Ascending aorta (tissue), 2 donors: ENCODE measurements at regions of chr1 and their contacts with region 1.

Region 1: DNA sequence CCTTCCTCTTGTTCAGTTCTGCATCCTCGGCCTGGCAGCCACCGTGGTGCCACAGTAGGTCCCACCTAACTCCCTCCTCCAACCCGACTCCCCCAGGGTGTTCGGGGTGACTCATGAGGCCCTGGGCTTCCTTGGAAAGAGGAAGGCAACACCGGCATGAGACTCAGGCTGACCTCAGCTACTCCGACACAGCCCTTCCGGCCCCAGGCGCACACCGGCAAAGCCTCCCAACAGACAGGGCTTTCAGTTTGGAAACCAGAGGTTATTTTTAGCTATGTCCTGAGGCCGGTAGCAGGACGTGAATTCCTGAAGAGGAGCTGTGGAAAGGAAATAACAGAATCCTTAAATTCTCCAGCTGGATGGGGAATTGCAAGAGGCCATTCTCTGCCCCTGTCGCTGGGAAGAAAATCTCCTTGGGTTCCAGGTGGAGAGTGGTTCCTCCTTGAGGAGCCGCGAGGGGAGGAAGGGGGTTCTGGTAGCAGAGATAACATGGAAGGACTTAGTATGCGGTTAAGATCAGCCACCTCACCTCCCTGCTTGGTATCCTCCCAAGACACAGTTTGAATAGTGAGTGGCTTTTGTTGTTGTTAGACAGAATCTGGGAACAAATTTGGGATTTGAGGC is 24.4 kb downstream of the PLXNA2 start:
- DNase-seq: peak; percentile 69 to 93
- H3K4me3 ChIP-seq: no peak overlapping the region
- H3K27ac ChIP-seq: peak overlapping the region; percentile 81 to 92
- H3K4me1 ChIP-seq: peaks cover 16 to 46% of the 10 kb centered on the region in 2 donors
- H3K27me3 ChIP-seq: no peaks in the 10 kb centered on the region
- CTCF ChIP-seq: no peak

Region 2: DNA sequence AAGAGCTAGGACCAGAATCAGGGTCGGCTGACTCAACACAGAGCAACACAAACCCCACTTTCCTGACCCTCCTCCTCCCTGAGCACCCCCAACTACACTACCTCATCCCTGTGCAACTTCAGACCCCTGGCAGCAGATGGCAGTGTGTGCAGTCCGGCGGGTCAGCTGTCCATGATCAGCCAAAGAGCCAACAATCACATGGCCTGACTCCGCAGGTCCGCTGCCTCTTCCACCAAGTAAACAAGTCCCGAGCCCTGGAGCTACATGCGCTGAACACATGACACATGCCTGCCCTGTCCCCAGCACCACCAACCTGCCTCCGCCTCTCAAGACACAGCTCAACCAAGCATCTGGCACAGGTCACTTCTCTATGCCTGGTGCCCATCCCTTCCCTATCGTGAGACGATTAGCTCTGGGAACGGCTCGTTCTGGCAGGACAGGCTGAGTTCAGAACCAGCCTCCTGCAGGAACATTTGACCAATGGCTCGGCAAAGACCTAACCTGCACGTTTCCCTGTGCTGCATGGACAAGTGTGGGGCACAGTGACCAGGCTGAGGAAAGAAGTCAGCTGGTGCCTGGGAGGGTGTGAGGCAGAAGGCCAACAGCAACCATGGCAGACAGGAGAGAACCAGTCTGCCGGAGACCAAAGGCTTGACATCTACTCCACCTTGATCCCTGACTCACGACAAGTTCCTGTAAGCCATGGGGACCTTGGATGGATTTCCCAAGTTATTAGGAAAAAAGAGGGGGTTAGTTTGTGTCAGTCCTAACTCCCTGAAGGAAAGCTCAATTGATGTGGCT is 407.7 kb before region 1 on chr1:
- intact Hi-C with region 1: no loop called
- DNase-seq: peak in 1 of 2 donors; percentile 85
- H3K4me3 ChIP-seq: peak overlapping the region; percentile 20 to 79
- H3K27ac ChIP-seq: peak overlapping the region; percentile 95 to 98
- H3K4me1 ChIP-seq: peaks cover 58 to 97% of the 10 kb centered on the region in 2 donors
- H3K27me3 ChIP-seq: no peaks in the 10 kb centered on the region
- CTCF ChIP-seq: peak; percentile 26 to 60 (median 41)

Region 3: GRCh38 chr1:208036109-208036808 is 183.5 kb before region 1 on chr1:
- intact Hi-C with region 1: no loop called
- DNase-seq: no peak
- H3K4me3 ChIP-seq: no peak overlapping the region
- H3K27ac ChIP-seq: no peak overlapping the region
- H3K4me1 ChIP-seq: peaks cover 3 to 8% of the 10 kb centered on the region in 2 donors
- H3K27me3 ChIP-seq: no peaks in the 10 kb centered on the region
- CTCF ChIP-seq: no peak

Region 4: DNA sequence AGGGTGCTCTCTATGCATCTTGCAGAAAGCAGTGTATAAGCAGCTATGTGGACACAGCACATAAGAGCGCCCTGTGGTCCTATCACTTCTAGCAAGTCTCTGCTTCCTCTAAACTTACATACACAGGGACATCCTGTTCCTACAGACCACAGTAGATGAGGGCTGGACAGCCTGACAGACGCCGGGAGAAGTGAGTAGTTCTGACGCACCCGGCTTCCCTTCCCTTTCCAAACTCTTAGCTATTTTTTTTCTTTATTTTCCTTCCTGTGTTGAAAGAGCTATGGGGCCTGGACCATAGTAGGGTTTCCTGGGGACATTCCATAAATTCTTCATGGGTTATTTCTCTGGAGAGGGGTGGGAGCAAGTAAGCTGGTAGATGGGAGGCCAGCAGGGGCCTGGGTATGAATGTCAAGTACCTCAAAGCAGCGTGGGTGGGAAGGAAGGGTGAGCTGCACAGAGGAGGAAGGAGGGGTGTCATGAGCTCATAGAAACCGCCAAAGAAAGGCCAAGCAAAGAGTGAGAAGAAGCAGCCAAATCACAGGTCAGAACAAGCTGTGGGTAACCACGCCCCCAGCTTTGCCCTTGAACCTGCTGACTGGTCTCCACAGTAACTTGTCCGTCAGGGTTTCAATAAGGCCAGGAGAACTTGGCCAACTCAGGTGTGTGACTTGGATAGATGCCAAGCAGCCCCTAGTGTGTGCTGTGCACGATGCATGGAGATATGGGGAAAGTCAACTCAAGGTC is 12.2 kb before region 1 on chr1:
- intact Hi-C with region 1: loop called (anchors 1 kb)
- DNase-seq: peak; percentile 55 to 90
- H3K4me3 ChIP-seq: no peak overlapping the region
- H3K27ac ChIP-seq: peak overlapping the region; percentile 59 to 92
- H3K4me1 ChIP-seq: peaks cover 23 to 57% of the 10 kb centered on the region in 2 donors
- H3K27me3 ChIP-seq: no peaks in the 10 kb centered on the region
- CTCF ChIP-seq: no peak

Region 5: GRCh38 chr1:208238710-208239472 is 19.1 kb after region 1 on chr1:
- intact Hi-C with region 1: loop called (anchors 2 kb)
- DNase-seq: peak in 1 of 2 donors; percentile 67
- H3K4me3 ChIP-seq: peak overlapping the region in 1 of 2 donors; percentile 10
- H3K27ac ChIP-seq: peak overlapping the region; percentile 14 to 58
- H3K4me1 ChIP-seq: peaks cover 28 to 45% of the 10 kb centered on the region in 2 donors
- H3K27me3 ChIP-seq: no peaks in the 10 kb centered on the region
- CTCF ChIP-seq: peak; percentile 44 to 85 (median 80)